Activated CD4-positive, alpha-beta T cell treated with anti-CD3 and anti-CD28 coated beads, Interleukin-2, amount 10 ng/mL, durations not matched to agents 7 days and 5 days (primary cell): ENCODE measurements at regions of chr11 and their contacts with region 1.

Region 1: GRCh38 chr11:44095506-44096394 is at the start of gene EXT2:
- DNase-seq: peak; percentile 85
- H3K4me3 Mint-ChIP-seq: peak within 1 kb of the TSS; percentile 82
- H3K27ac Mint-ChIP-seq: peak within 1 kb of the TSS; percentile 77
- H3K4me1 Mint-ChIP-seq: peaks cover 22% of the 10 kb centered on the region
- H3K27me3 Mint-ChIP-seq: peaks cover 7% of the 10 kb centered on the region
- total RNA-seq, gene EXT2: 26.7 to 27.7 TPM

Region 2: DNA sequence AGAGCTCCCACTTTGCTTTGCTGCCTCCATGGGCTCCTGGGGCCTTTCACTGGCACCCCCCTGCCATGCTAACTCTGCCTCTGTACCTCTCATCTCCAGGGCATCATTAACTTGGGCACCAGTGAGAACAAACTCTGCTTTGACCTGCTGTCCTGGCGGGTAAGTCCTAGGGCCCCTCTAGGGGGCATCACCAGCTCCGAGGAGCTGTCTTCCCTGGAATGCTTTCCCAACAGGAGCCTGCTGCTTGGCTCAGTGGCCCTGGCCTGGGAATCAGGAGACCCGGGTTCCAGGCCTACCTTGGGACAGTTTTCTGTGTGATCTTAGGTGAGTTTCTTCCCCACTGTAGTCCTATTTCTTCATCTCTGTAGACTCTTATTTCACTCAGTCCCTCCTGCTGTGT is 24.6 kb before region 1 on chr11:
- CTCF ChIA-PET with region 1: interaction called, 14 read pairs
- POLR2A ChIA-PET with region 1: no interaction called
- DNase-seq: no peak
- H3K4me3 Mint-ChIP-seq: no peak overlapping the region
- H3K27ac Mint-ChIP-seq: no peak overlapping the region
- H3K4me1 Mint-ChIP-seq: peaks cover 13% of the 10 kb centered on the region
- H3K27me3 Mint-ChIP-seq: no peaks in the 10 kb centered on the region

Region 3: GRCh38 chr11:44083906-44084305 is 11.8 kb before region 1 on chr11:
- CTCF ChIA-PET with region 1: interaction called, 11 read pairs
- POLR2A ChIA-PET with region 1: interaction called, 3 read pairs
- DNase-seq: no peak
- H3K4me3 Mint-ChIP-seq: no peak overlapping the region
- H3K27ac Mint-ChIP-seq: no peak overlapping the region
- H3K4me1 Mint-ChIP-seq: peaks cover 7% of the 10 kb centered on the region
- H3K27me3 Mint-ChIP-seq: no peaks in the 10 kb centered on the region